ENCODE measurements at regions of chr6 and their contacts with region 1.

Region 1: GRCh38 chr6:83221889-83222479 is 28.8 kb downstream of the RWDD2A start:
- DNase-seq: no peak
- H3K4me3 ChIP-seq: no peak overlapping the region
- H3K27ac ChIP-seq: no peak overlapping the region
- H3K4me1 ChIP-seq: peaks cover 0 to 7% of the 10 kb centered on the region in 2 donors
- H3K27me3 ChIP-seq: no peaks in the 10 kb centered on the region
- CTCF ChIP-seq: peak in 2 of 3 experiments; percentile 61 to 66

Region 2: DNA sequence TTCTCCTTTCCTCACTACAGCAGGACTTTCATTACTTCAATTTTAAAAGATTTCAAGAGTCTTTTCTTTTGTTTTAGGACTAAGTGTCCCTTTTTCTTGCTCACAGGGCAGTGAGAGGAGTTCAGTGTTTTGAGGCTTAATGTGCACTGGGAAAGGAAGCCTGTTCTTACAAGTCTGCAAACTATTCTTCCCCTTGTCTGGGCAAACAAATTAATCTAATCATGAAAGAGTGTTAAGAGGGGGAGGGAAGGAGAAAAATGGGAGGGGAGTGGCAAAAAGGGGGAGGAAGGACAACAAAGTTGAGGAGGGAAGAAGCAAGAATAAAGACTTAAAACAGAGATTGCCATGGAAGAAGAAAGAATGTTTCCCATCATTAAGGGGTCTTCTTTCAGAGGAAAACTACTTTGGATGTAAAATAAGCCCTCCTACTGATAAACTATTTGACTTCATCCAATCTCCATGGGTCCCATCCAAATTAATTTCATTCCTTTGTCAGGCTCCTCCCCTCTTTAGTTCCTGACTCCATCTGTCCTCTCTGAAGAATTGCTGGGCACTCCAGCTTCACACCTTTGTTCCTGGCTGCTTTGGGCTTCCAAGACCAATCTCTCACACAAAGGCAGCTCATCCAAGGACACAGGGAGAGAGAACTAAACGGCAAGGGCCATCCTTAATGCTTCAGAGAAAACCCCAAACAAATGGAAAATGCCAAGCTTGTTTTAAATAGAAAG is 613.8 kb before region 1 on chr6:
- intact Hi-C with region 1: no loop called
- DNase-seq: no peak
- H3K4me3 ChIP-seq: no peak overlapping the region
- H3K27ac ChIP-seq: no peak overlapping the region
- H3K4me1 ChIP-seq: no peaks in the 10 kb centered on the region
- H3K27me3 ChIP-seq: no peaks in the 10 kb centered on the region
- CTCF ChIP-seq: no peak

Region 3: GRCh38 chr6:83199863-83200225 is 22.1 kb before region 1 on chr6:
- intact Hi-C with region 1: no loop called
- DNase-seq: no peak
- H3K4me3 ChIP-seq: no peak overlapping the region
- H3K27ac ChIP-seq: no peak overlapping the region
- H3K4me1 ChIP-seq: peaks cover 0 to 6% of the 10 kb centered on the region in 2 donors
- H3K27me3 ChIP-seq: no peaks in the 10 kb centered on the region
- CTCF ChIP-seq: no peak

Region 4: DNA sequence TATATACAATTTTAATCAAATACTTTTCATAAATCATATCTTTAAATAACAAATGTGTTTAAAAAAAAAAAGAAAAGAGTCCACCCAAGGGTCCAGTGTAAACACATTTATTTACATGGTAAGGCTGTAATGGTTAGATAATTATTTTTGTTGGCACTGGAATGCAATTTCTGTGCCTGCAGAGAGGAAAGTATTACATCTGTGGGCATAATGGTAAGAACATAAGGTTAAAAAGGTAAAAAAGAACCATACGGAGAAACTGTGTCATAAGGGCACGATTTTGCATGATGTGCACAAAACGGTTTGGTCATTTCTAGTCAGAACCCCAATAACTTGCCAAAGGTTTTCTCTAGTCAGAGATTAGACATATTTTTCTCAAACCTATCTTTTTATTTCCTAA is 25.5 kb after region 1 on chr6:
- intact Hi-C with region 1: no loop called
- DNase-seq: no peak
- H3K4me3 ChIP-seq: no peak overlapping the region
- H3K27ac ChIP-seq: no peak overlapping the region
- H3K4me1 ChIP-seq: no peaks in the 10 kb centered on the region
- H3K27me3 ChIP-seq: no peaks in the 10 kb centered on the region
- CTCF ChIP-seq: no peak

Region 5: DNA sequence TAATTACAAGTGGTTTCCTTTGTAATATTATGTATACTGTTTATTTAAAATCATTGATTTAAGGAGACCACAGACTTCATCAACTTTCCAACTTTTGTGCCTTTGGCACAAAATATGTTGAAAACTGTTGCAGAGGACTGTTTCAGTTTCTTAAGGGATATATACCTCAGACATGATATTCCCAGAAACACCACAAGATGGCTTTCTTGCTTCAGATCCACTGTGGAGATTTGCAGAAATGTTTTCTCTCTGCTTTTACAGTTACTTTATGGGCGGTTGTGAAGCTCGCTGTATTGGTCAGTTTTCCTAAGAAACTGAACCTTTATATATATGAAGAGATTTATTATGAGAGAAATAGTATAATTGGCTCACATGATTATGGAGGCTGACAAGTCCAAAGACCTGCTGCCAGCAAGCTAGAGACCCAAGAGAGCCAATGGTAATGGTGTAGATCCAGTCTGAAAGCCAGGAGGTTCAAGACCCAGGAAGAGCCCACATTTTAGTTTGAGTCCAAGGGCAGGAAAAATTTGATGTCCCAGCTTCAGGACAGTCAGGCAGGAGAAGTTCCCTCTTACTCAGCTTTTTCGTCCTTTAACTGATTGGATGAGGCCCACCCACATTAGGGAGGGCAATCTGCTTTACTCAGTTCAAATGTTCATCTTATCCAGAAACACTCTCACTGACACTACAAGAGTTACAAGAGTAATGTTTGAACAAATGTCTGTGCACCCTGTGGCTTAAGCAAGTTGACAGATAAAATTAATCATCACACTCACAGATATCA is 196.1 kb after region 1 on chr6:
- intact Hi-C with region 1: loop called (anchors 2 kb)
- DNase-seq: no peak
- H3K4me3 ChIP-seq: no peak overlapping the region
- H3K27ac ChIP-seq: no peak overlapping the region
- H3K4me1 ChIP-seq: no peaks in the 10 kb centered on the region
- H3K27me3 ChIP-seq: no peaks in the 10 kb centered on the region
- CTCF ChIP-seq: peak; percentile 35 to 68 (median 48)

Region 6: DNA sequence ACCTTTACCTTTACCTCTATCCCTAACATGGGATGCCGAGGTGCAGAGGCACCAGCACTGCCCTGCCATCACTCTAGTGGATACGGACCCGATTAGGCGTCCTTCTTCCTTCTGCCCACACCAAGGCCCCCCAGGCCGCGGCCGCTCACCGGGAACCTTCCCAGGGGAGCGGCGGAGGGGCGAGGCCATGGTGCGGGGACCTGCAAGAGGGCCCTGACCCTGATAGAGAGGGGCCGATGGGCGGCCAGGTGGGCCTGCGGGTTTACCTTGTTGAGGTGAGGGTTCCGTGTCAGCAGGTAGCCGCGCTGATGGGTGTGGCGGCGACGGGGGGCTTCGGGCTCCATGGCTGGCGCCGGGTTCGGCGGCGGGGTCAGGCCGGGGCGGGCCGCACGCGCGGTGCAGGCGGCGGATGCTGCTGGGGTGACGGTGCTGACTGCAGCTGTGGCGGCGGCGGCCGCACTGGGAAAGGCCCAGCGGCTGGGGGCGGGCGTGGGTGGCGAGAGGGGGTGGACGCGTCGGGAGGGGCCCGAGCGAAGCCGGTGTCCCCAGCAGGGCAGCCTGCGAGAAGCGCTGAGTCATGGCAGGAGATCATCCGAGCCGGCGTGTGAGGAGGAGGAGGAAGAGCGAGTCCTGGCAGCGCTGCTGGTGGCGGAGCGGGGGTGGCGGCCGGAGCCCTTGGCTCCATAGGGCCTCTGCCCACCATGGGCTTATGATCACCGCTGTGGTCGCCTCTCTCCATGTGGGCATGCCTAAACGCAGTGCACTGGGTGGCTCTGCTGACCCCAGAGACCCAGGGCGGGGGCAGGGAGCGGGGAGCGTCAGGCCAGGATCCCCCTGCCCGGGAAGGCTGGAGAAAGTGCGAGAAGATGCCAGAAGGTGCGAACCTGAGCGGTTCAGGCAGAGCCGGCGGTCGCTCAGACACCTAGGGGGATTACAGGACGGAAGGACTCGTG is 208.9 kb after region 1 on chr6 and contains the start of gene ME1:
- intact Hi-C with region 1: loop called (anchors 5 kb)
- DNase-seq: peak; percentile 52 to 88
- H3K4me3 ChIP-seq: peak within 1 kb of the TSS; percentile 79 to 85
- H3K27ac ChIP-seq: peak within 1 kb of the TSS; percentile 68 to 76
- H3K4me1 ChIP-seq: peaks cover 0 to 8% of the 10 kb centered on the region in 2 donors
- H3K27me3 ChIP-seq: no peaks in the 10 kb centered on the region
- CTCF ChIP-seq: no peak
- total RNA-seq, gene ME1: 8.4 TPM

Region 7: GRCh38 chr6:83474309-83474708 is 252.3 kb after region 1 on chr6:
- intact Hi-C with region 1: no loop called
- DNase-seq: no peak
- H3K4me3 ChIP-seq: no peak overlapping the region
- H3K27ac ChIP-seq: no peak overlapping the region
- H3K4me1 ChIP-seq: no peaks in the 10 kb centered on the region
- H3K27me3 ChIP-seq: no peaks in the 10 kb centered on the region
- CTCF ChIP-seq: no peak

Region 8: GRCh38 chr6:83514866-83515466 is 293.0 kb after region 1 on chr6:
- intact Hi-C with region 1: loop called (anchors 1 kb)
- DNase-seq: no peak
- H3K4me3 ChIP-seq: peak overlapping the region in 1 of 2 donors; percentile 4
- H3K27ac ChIP-seq: no peak overlapping the region
- H3K4me1 ChIP-seq: peaks cover 0 to 21% of the 10 kb centered on the region in 2 donors
- H3K27me3 ChIP-seq: no peaks in the 10 kb centered on the region
- CTCF ChIP-seq: peak; percentile 62 to 87 (median 74)